Pancreas (tissue), 10 donors: ENCODE measurements at regions of chr11 and their contacts with region 1.

Region 1: DNA sequence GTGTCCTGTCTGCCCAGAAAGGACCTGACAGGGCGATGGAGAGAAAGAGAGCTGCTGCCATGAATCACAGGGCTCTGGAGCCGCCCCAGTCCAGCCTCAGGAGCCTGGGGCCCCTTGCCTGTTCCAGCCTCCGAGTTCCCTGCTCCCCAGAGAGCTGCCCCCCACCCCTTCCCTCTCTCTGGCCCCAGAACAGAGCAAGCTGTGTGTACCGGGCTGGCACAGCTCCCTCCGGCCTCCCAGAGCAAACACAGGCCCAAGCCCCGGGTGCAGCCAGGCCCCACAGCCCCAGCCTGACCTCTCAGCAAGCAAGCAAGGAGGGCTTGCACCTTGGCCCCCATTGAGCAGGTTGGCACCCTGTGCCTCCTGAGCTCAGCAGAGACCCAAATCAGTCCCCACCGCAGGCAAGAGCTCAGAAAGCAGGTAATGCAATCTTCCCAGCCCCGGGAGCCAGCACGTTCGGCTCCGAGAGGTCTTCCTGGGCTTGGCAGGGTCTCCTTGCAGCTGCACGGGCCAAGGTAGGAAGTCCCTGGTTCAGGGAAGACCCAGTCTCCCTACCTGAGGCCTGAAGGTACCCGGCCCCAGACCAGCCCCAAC is 1.4 kb downstream of the PACSIN3 start:
- DNase-seq: peak in 5 of 6 donors; percentile 60 to 92 (median 65)
- ATAC-seq: peak; percentile 14 to 62 (median 52)
- H3K4me3 ChIP-seq: peak overlapping the region in 3 of 4 donors; percentile 68 to 84 (median 69)
- H3K27ac ChIP-seq: peak overlapping the region; percentile 76 to 86 (median 78)
- H3K4me1 ChIP-seq: peaks cover 0 to 14% (median 9%) of the 10 kb centered on the region in 3 donors
- H3K27me3 ChIP-seq: no peaks in the 10 kb centered on the region
- CTCF ChIP-seq: no peak

Region 2: DNA sequence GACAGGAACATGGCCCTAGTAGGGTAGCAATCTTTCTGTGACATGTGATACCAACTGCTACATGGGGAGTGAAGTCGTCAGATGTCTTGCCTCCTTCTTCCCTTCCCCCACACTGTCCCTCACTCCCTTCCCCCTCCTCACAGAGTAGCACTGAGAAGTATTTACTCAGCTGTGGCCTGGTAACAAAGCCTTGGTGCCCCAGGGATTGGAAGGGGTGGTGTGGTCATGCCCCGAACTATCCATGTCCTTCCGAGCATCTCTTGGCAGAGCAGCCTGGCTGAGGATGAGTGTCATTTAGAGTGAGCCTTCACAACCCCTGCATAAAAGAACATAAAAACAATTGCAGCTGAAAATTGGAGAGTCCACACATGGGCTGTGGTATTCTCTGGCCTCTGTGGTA is 54.3 kb before region 1 on chr11:
- intact Hi-C with region 1: no loop called
- DNase-seq: peak in 2 of 6 donors; percentile 69 to 75
- ATAC-seq: peak; percentile 59 to 72 (median 68)
- H3K4me3 ChIP-seq: no peak overlapping the region
- H3K27ac ChIP-seq: peak overlapping the region in 3 of 4 donors; percentile 18 to 62 (median 42)
- H3K4me1 ChIP-seq: peaks cover 45 to 72% (median 47%) of the 10 kb centered on the region in 3 donors
- H3K27me3 ChIP-seq: no peaks in the 10 kb centered on the region
- CTCF ChIP-seq: no peak

Region 3: GRCh38 chr11:47264521-47264920 is 79.7 kb after region 1 on chr11:
- intact Hi-C with region 1: loop called in 1 of 3 experiments (anchors 5 kb)
- DNase-seq: no peak
- ATAC-seq: no peak
- H3K4me3 ChIP-seq: no peak overlapping the region
- H3K27ac ChIP-seq: no peak overlapping the region
- H3K4me1 ChIP-seq: no peaks in the 10 kb centered on the region
- H3K27me3 ChIP-seq: no peaks in the 10 kb centered on the region
- CTCF ChIP-seq: no peak